ENCODE measurements at regions of chr13 and their contacts with region 1.

Region 1: DNA sequence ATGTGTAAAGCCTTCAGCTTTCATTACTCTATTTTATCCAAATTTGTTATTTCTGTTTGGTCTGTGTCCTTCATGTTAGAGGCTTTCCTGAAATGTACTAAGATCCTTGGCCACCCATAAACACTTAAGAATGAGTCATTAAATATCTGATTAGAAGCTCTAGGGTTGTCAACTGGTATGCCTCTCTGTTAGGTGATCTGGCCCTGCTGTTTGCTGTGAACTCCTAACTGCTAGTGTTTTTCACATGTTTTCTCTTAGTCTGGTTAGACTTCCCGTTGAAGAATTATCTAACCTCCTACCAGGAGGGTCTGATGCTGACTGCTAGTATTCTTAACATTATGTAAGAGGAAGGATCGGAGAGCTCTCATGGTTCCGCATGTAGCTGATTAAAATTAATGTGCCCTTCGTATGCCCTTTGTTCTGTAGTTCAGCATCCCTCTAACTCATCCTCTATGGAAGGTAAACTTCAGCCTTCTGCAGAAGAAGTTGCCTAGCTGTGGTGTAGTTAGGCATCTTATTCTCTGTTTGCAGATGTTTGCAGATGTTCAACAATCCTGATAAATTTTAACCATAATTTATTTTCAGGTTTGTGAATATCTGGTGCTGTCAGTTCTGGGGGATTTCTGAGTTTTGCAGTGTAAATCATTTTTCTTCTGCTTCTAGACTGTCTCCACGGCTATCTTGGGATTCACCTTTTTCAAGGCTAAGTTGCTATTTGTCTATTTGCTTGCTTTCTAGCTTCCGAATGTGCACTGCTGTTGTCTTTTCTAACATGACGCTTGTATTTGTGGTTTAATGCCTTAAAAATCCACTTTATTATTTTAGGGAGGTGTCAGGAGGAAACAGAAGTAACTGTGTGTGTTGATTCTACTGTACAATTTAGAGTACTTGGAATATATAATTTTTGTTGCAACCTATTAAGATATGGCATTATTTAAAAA is 207.2 kb upstream of the SPRY2 start:
- DNase-seq: no peak
- ATAC-seq: no peak
- H3K4me3 Mint-ChIP-seq: no peak overlapping the region
- H3K27ac Mint-ChIP-seq: no peak overlapping the region
- H3K4me1 Mint-ChIP-seq: peaks cover 19% of the 10 kb centered on the region
- H3K27me3 Mint-ChIP-seq: no peaks in the 10 kb centered on the region
- CTCF ChIP-seq: no peak

Region 2: DNA sequence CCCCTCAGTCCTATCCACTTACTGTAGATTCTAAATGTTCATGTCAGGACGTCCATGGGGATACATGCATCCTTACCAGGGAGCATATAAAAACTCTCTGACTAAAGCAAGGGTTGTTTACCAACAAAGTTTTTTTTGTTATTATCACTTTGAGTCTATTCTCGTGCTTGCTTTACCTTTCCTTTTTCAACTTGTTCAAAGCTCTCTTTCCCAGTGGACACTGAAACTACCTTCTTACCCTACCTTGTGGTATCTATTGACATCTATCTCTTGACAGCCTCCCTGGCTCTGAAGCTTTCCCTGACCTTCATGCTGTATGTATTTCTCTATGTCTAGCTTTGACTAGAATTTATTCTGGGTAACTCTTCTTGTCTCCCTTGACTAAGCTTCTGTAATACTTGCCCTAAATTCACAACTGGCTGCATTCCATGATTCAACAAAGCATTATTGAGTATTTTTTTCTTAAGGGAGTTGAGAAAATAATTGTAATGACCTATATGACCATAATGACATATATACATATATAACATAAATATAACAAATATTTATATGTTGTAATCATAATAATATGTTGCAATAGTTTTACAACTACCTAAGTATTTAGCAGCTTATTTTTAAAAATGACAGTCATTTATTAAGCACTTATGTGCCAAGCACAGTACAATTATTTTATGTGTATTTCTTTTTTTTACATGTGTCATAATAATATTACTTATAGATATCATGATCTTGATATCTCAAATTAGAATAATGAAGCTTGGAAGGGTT is 196.2 kb after region 1 on chr13:
- CTCF ChIA-PET with region 1: no interaction called
- POLR2A ChIA-PET with region 1: interaction called, 11 read pairs
- DNase-seq: no peak
- ATAC-seq: no peak
- H3K4me3 Mint-ChIP-seq: no peak overlapping the region
- H3K27ac Mint-ChIP-seq: no peak overlapping the region
- H3K4me1 Mint-ChIP-seq: no peaks in the 10 kb centered on the region
- H3K27me3 Mint-ChIP-seq: no peaks in the 10 kb centered on the region
- CTCF ChIP-seq: no peak

Measured in WTC11 (cell line).